SK-N-SH (cell line): ENCODE measurements at regions of chr19 and their contacts with region 1.

Region 1: DNA sequence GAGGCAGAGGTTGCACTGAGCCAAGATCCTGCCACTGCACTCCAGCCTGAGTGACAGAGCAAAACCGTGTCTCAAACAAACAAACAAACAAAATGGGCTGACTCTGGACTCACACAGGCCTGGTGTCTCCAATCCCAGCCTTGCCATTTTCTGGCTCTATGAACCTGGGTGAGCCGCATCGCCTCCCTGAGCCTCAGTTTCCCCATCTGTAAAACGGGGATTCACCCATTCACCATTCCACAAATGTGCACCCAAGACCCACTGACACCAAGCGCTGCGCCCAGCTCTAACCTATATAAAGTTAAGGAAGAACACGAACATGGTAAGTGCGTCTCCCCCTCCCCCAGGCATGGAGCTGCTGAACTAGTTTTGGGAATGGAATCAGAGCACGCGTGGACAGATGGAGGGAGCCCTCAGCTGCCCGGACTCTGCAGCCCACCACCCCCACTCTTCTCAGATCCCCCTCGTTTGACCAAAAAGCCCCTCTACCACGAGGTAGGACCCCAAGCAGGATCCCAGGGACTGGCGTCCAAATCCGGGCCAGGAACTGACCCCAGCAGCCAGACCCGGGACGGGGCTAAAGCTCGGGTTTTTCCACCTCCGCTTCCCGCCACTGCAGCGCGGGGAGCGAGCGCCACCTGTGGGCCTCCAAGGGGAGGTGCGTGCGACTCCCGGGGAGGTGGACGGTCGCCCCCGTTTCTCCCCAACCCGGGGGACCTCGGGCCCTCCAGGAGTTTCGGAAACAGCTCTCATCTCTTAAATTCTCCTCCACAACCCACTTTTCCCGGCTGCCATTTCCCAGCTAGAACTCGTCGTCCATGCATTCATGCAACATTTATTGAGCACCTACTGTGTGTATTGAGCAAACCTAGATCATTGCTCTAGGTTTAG is 33.0 kb upstream of the ADGRE5 start:
- DNase-seq: peak; percentile 95
- H3K4me3 ChIP-seq: peak overlapping the region; percentile 23 to 55; a peak in 2 of 4 replicates
- H3K27ac ChIP-seq: no peak overlapping the region
- H3K4me1 ChIP-seq: no peaks in the 10 kb centered on the region; a peak in 1 of 4 replicates
- H3K27me3 ChIP-seq: no peaks in the 10 kb centered on the region
- CTCF ChIP-seq: peak; percentile 94
- EP300 ChIP-seq: no peak
- RAD21 ChIP-seq: peak; percentile 90

Region 2: GRCh38 chr19:14136509-14137281 is 211.5 kb before region 1 on chr19 and contains the start of gene ASF1B:
- CTCF ChIA-PET with region 1: interaction called, 256 read pairs
- POLR2A ChIA-PET with region 1: interaction called, 3 read pairs
- DNase-seq: peak; percentile 98
- H3K4me3 ChIP-seq: peak within 1 kb of the TSS; percentile 68 to 89
- H3K27ac ChIP-seq: peak within 1 kb of the TSS; percentile 59 to 83
- H3K4me1 ChIP-seq: peaks cover 0 to 7% of the 10 kb centered on the region in 2 experiments; a peak in 2 of 4 replicates
- H3K27me3 ChIP-seq: no peaks in the 10 kb centered on the region
- CTCF ChIP-seq: peak; percentile 70
- EP300 ChIP-seq: no peak
- RAD21 ChIP-seq: peak; percentile 93
- polyA plus RNA-seq, gene ASF1B: 17.8 and 19.0 TPM in 2 replicates

Region 3: DNA sequence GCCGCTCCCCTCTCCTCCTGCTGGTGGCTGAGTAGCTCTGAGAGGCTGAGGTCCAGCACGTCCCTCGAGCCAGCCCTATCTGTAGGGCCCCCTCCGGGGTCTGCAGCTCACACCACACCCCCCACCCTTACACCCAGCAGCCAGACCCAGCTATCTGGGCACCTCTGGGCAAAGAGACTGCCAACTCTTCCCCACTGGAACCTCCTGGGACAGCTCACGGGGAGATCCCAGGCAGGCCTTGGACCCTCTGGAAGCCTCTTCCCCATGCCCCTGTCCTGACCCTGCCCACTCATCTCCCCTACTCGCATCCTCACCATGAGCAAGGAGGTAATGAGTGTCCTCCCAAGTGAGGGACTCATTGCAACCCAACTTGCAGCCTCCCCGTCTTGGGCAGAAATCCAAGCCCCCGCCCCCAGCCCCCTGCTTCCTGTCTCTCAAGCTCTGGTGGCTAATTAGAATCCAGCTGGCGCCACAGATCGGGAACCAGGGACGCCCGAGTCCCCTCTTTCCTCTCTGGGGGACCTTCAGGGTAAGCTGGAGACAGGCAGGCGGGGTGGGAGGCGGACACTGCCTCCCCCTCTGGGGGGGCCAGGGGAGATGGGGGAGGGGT is 164.4 kb before region 1 on chr19:
- CTCF ChIA-PET with region 1: interaction called, 11 read pairs
- POLR2A ChIA-PET with region 1: no interaction called
- DNase-seq: peak; percentile 74
- H3K4me3 ChIP-seq: no peak overlapping the region
- H3K27ac ChIP-seq: no peak overlapping the region; a peak in 1 of 4 replicates
- H3K4me1 ChIP-seq: peaks cover 0 to 8% of the 10 kb centered on the region in 2 experiments; a peak in 1 of 4 replicates
- H3K27me3 ChIP-seq: no peaks in the 10 kb centered on the region
- CTCF ChIP-seq: no peak
- EP300 ChIP-seq: no peak
- RAD21 ChIP-seq: no peak

Region 4: DNA sequence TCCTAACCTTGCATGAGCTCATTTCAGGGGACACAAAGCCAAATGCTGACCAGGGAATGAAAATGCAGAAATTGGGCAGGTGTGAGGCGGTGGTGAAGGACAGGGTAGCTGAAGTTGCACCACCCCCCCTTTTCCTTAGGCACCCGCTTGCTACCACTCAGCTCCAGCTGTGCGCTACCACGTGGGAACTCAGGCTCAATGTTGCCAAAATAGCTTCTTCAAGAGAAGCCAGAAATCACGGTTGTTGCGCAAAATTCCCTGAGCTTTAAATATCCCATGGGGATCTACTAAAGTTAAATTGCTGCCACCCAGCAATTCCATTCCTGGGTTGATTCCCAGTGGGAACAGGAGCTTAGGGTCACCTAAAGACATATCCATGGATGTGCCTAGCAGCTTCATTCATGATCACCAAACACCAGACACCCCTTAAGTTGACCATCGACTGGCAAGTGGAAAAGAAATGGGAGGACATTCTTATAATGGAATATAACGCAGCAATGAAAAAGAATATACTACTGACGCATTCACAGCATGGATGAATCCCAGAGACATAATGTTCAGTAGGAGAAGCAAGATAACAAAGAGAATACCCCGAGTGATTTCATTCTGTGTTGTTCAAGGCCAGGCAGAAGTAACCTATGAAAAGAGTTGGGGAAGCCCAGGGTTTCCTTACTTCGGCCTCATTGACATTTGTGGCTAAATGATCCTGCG is 129.5 kb before region 1 on chr19:
- CTCF ChIA-PET with region 1: interaction called, 20 read pairs
- POLR2A ChIA-PET with region 1: no interaction called
- DNase-seq: no peak
- H3K4me3 ChIP-seq: no peak overlapping the region
- H3K27ac ChIP-seq: no peak overlapping the region
- H3K4me1 ChIP-seq: no peaks in the 10 kb centered on the region
- H3K27me3 ChIP-seq: no peaks in the 10 kb centered on the region
- CTCF ChIP-seq: no peak
- EP300 ChIP-seq: no peak
- RAD21 ChIP-seq: no peak

Region 5: GRCh38 chr19:14318873-14319272 is 29.4 kb before region 1 on chr19:
- CTCF ChIA-PET with region 1: interaction called, 21 read pairs
- POLR2A ChIA-PET with region 1: no interaction called
- DNase-seq: peak; percentile 64
- H3K4me3 ChIP-seq: no peak overlapping the region
- H3K27ac ChIP-seq: no peak overlapping the region
- H3K4me1 ChIP-seq: no peaks in the 10 kb centered on the region
- H3K27me3 ChIP-seq: no peaks in the 10 kb centered on the region
- CTCF ChIP-seq: peak; percentile 37
- EP300 ChIP-seq: no peak
- RAD21 ChIP-seq: peak; percentile 23; the same call in 1 of the 2 replicates

Region 6: DNA sequence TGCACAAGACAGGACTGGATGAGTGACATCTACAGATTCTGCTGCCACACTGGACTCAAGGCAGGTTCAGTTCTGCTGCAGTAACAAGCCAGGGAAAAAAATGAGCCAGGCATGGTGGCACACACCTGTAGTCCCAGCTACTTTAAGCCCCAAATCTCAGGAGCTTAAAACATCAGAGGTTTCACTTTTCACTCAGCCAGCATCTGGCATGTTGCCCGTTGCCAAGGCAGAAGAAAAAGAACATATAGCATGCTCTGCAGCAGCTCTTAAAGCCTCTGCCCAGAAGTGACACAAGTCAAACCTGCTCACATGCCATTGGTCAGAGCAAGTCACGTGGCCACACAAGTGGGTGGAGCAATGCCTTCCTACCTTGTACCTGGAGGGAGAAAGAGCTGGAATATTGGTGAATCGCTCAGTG is 18.3 kb after region 1 on chr19:
- CTCF ChIA-PET with region 1: interaction called, 42 read pairs
- POLR2A ChIA-PET with region 1: no interaction called
- DNase-seq: peak; percentile 51
- H3K4me3 ChIP-seq: no peak overlapping the region
- H3K27ac ChIP-seq: no peak overlapping the region
- H3K4me1 ChIP-seq: peaks cover 0 to 6% of the 10 kb centered on the region in 2 experiments; a peak in 1 of 4 replicates
- H3K27me3 ChIP-seq: no peaks in the 10 kb centered on the region
- CTCF ChIP-seq: no peak
- EP300 ChIP-seq: no peak
- RAD21 ChIP-seq: no peak

Region 7: GRCh38 chr19:14413693-14414181 is 65.5 kb after region 1 on chr19:
- CTCF ChIA-PET with region 1: interaction called, 11 read pairs
- POLR2A ChIA-PET with region 1: no interaction called
- DNase-seq: peak; percentile 73
- H3K4me3 ChIP-seq: no peak overlapping the region
- H3K27ac ChIP-seq: peak overlapping the region; percentile 51 to 54; a peak in 3 of 4 replicates
- H3K4me1 ChIP-seq: peaks cover 14 to 15% of the 10 kb centered on the region in 2 experiments; a peak in 2 of 4 replicates
- H3K27me3 ChIP-seq: no peaks in the 10 kb centered on the region
- CTCF ChIP-seq: no peak
- EP300 ChIP-seq: no peak
- RAD21 ChIP-seq: no peak